Gastrocnemius medialis (tissue), 4 donors: ENCODE measurements at regions of chr14 and their contacts with region 1.

Region 1: GRCh38 chr14:37874429-37875191 is 279.2 kb downstream of the TTC6 start:
- DNase-seq: peak in 1 of 2 donors; percentile 47
- ATAC-seq: peak; percentile 58 to 62
- H3K4me3 ChIP-seq: no peak overlapping the region
- H3K27ac ChIP-seq: no peak overlapping the region
- H3K4me1 ChIP-seq: no peaks in the 10 kb centered on the region
- H3K27me3 ChIP-seq: no peaks in the 10 kb centered on the region
- CTCF ChIP-seq: peak; percentile 36 to 75 (median 64)
- POLR2A ChIP-seq: no peak

Region 2: GRCh38 chr14:37230551-37231194 is 643.9 kb before region 1 on chr14:
- in situ Hi-C with region 1: loop called in 1 of 4 experiments (anchors 25 kb)
- intact Hi-C with region 1: no loop called
- DNase-seq: no peak
- ATAC-seq: peak in 1 of 2 donors; percentile 55
- H3K4me3 ChIP-seq: no peak overlapping the region
- H3K27ac ChIP-seq: no peak overlapping the region
- H3K4me1 ChIP-seq: no peaks in the 10 kb centered on the region
- H3K27me3 ChIP-seq: no peaks in the 10 kb centered on the region
- CTCF ChIP-seq: peak in 4 of 5 experiments; percentile 43 to 76 (median 56)
- POLR2A ChIP-seq: no peak

Region 3: DNA sequence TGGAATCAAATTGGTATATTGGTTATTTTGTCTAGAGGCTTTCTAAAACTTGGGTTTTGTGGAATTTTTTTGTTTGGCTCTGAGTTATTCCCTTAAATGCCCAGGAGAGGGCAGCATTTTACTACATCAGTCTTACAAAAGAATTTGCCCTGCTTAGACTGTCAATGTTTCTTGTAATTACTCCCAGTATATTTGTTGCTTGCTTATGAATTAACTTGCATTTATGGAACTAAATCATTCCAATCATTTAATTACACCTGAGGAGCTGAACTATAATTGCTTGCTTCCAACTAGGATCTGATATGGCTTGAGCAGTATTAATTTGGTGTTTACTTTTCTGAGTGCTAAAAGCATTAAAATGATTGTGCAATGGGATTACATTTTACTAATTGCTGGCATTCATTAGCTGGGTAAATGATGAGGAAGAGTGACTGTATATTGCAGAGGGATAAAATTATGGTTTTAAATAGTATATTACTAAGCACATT is 628.1 kb before region 1 on chr14:
- in situ Hi-C with region 1: loop called in 2 of 4 experiments (anchors 25 kb)
- intact Hi-C with region 1: loop called (anchors 5 kb)
- DNase-seq: no peak
- ATAC-seq: no peak
- H3K4me3 ChIP-seq: no peak overlapping the region
- H3K27ac ChIP-seq: no peak overlapping the region
- H3K4me1 ChIP-seq: no peaks in the 10 kb centered on the region
- H3K27me3 ChIP-seq: no peaks in the 10 kb centered on the region
- CTCF ChIP-seq: peak in 4 of 5 experiments; percentile 39 to 68 (median 61)
- POLR2A ChIP-seq: no peak

Region 4: GRCh38 chr14:37253905-37254304 is 620.7 kb before region 1 on chr14:
- in situ Hi-C with region 1: loop called in 2 of 4 experiments (anchors 25 kb)
- intact Hi-C with region 1: loop called (anchors 5 kb)
- DNase-seq: no peak
- ATAC-seq: no peak
- H3K4me3 ChIP-seq: no peak overlapping the region
- H3K27ac ChIP-seq: no peak overlapping the region
- H3K4me1 ChIP-seq: no peaks in the 10 kb centered on the region
- H3K27me3 ChIP-seq: no peaks in the 10 kb centered on the region
- CTCF ChIP-seq: no peak
- POLR2A ChIP-seq: no peak